ENCODE measurements at regions of chr1 and their contacts with region 1.

Region 1: GRCh38 chr1:114695430-114696058 is at the start of gene AMPD1:
- DNase-seq: no peak
- ATAC-seq: no peak
- H3K4me3 ChIP-seq: no peak within 1 kb of the TSS
- H3K27ac ChIP-seq: no peak within 1 kb of the TSS
- H3K4me1 ChIP-seq: no peaks in the 10 kb centered on the region
- H3K27me3 ChIP-seq: peaks cover 15 to 16% of the 10 kb centered on the region in 2 experiments
- CTCF ChIP-seq: no peak
- EP300 ChIP-seq: no peak
- POLR2A ChIP-seq: no peak
- RAD21 ChIP-seq: no peak
- polyA plus RNA-seq, gene AMPD1: not detected

Region 2: GRCh38 chr1:114707604-114708003 is 12.1 kb after region 1 on chr1:
- CTCF ChIA-PET with region 1: no interaction called
- POLR2A ChIA-PET with region 1: interaction called, 12 read pairs
- in situ Hi-C with region 1: no loop called
- intact Hi-C with region 1: no loop called
- DNase-seq: no peak
- ATAC-seq: no peak
- H3K4me3 ChIP-seq: no peak overlapping the region
- H3K27ac ChIP-seq: no peak overlapping the region
- H3K4me1 ChIP-seq: no peaks in the 10 kb centered on the region
- H3K27me3 ChIP-seq: no peaks in the 10 kb centered on the region
- CTCF ChIP-seq: no peak
- EP300 ChIP-seq: no peak
- POLR2A ChIP-seq: no peak
- RAD21 ChIP-seq: no peak

Region 3: DNA sequence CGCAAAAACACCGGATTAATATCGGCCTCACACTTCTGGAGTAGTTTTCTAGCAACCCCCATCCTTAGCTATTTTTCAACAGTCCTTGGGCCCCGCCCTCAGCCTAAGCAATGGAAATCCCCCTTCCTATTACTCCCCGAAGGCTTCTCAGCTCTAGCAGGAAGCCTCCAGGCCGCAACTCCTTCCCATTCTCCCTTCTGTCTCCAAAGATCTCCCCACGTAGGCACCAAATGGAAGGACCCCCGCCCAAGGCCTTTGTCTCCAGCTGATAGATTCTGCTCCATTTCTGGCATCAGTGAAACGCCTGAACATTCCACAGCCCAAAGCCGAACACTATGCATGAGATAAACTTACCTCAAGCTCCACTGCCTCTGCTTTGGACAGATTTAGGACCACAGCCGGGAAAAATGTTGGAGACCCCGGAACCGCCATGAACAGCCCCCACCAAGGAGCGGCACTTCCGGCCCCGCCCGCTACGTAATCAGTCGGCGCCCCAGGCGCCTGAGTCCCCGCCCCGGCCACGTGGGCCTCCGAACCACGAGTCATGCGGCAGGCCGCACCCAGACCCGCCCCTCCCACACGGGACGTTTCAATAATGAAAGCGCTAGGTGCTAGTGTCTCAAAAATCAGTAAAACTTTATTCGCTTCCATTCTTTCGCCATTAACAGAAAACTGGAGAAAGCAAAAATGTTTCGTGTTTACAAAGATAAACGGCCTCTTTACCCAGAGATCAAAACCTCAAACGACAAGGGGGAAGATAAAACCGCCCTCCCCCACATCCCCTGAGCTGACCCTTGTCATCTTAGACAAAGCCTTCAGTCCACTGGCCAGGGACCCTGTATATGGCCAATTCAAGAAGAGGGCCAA is 21.0 kb after region 1 on chr1 and contains the start of gene NRAS:
- CTCF ChIA-PET with region 1: no interaction called
- POLR2A ChIA-PET with region 1: interaction called, 14 read pairs
- in situ Hi-C with region 1: no loop called
- intact Hi-C with region 1: no loop called
- DNase-seq: peak; percentile 96 to 98 (median 96)
- ATAC-seq: peak; percentile 97
- H3K4me3 ChIP-seq: peak within 1 kb of the TSS; percentile 86
- H3K27ac ChIP-seq: peak within 1 kb of the TSS; percentile 97
- H3K4me1 ChIP-seq: peaks cover 0 to 9% of the 10 kb centered on the region in 2 experiments; a peak in 2 of 5 replicates
- H3K27me3 ChIP-seq: no peaks in the 10 kb centered on the region
- CTCF ChIP-seq: peak in 1 of 3 experiments; percentile 6; a peak in 1 of 6 replicates
- EP300 ChIP-seq: peak; percentile 53; the same call in 1 of the 2 replicates
- POLR2A ChIP-seq: peak; percentile 93
- RAD21 ChIP-seq: peak in 1 of 2 experiments; percentile 33; a peak in 3 of 4 replicates
- polyA plus RNA-seq, gene NRAS: 58.2 to 79.7 TPM

Region 4: GRCh38 chr1:114729782-114730181 is 34.2 kb after region 1 on chr1:
- CTCF ChIA-PET with region 1: no interaction called
- POLR2A ChIA-PET with region 1: no interaction called
- in situ Hi-C with region 1: no loop called
- intact Hi-C with region 1: no loop called
- DNase-seq: no peak
- ATAC-seq: no peak
- H3K4me3 ChIP-seq: no peak overlapping the region
- H3K27ac ChIP-seq: no peak overlapping the region
- H3K4me1 ChIP-seq: no peaks in the 10 kb centered on the region
- H3K27me3 ChIP-seq: no peaks in the 10 kb centered on the region
- CTCF ChIP-seq: no peak
- EP300 ChIP-seq: no peak
- POLR2A ChIP-seq: no peak
- RAD21 ChIP-seq: no peak